ENCODE measurements at regions of chr11 and their contacts with region 1.

Region 1: DNA sequence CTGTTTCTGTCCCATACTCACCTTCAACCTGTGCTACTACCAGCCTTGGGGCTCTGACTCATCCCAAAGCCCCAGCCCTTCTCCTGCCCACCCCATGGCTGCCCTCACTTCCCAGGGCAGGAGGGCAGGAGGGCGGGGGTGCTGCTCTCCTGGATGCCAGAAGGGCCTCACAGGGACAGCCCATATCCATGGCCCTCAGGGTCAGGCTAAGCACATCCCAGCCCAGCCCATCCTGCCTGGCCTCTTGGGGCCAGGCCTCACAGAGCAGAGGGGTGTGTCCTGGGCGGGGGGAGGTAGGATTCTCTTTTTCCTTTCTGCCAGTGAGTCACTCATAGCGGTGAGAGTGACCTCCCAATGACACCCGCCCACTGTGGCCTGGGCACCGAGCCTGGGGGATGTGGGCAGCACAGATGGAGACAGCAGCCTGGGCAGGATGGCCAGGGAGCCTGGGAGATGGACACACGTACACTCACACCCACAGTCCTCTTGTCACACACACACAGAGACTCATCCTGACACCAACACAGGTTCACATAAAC is 2.4 kb downstream of the LTBP3 start:
- DNase-seq: peak in 2 of 5 donors; percentile 48
- H3K4me3 ChIP-seq: no peak overlapping the region
- H3K27ac ChIP-seq: peak overlapping the region; percentile 51 to 100
- H3K4me1 ChIP-seq: peaks cover 28% of the 10 kb centered on the region
- H3K27me3 ChIP-seq: no peaks in the 10 kb centered on the region
- CTCF ChIP-seq: no peak
- EP300 ChIP-seq: no peak
- POLR2A ChIP-seq: no peak

Region 2: GRCh38 chr11:65540297-65541092 is 15.3 kb before region 1 on chr11:
- intact Hi-C with region 1: loop called in 1 of 4 experiments (anchors 2 kb)
- DNase-seq: peak; percentile 89 to 96 (median 93)
- H3K4me3 ChIP-seq: peak overlapping the region; percentile 51
- H3K27ac ChIP-seq: peak overlapping the region; percentile 84 to 86
- H3K4me1 ChIP-seq: peaks cover 8% of the 10 kb centered on the region
- H3K27me3 ChIP-seq: no peaks in the 10 kb centered on the region
- CTCF ChIP-seq: peak; percentile 71 to 97 (median 92)
- EP300 ChIP-seq: peak; percentile 50
- POLR2A ChIP-seq: peak; percentile 21

Region 3: DNA sequence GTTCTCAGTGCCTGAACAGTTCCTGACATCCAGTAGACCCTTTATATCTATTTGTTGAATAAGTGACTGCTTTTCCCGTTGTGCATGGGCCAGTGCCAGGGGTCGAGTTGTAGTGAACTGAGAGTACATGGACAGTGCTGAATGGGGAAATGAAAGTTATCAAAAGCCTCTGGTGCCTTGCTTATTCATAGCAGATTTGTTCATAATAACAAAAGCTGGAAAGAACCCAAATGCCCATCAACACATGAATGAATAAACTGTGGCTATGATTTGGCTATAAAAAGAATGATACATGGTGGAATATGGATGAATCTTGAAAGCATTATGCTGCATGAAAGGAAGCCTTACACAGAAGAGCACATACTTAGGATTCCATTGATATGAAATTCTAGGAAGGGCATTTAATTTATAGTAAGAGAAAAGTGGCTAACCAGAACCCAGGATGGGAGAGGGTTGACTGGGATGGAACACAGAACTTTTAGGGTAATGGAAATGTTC is 556.9 kb after region 1 on chr11:
- intact Hi-C with region 1: no loop called
- DNase-seq: no peak
- H3K4me3 ChIP-seq: no peak overlapping the region
- H3K27ac ChIP-seq: no peak overlapping the region
- H3K4me1 ChIP-seq: peaks cover 6% of the 10 kb centered on the region
- H3K27me3 ChIP-seq: no peaks in the 10 kb centered on the region
- CTCF ChIP-seq: no peak
- EP300 ChIP-seq: no peak
- POLR2A ChIP-seq: no peak